ENCODE measurements at regions of chr15 and their contacts with region 1.

Region 1: GRCh38 chr15:67531379-67532059 is 10.6 kb downstream of the C15orf61 start:
- DNase-seq: peak; percentile 9
- H3K4me3 ChIP-seq: no peak overlapping the region
- H3K27ac ChIP-seq: no peak overlapping the region
- H3K4me1 ChIP-seq: no peaks in the 10 kb centered on the region
- H3K27me3 ChIP-seq: no peaks in the 10 kb centered on the region
- CTCF ChIP-seq: no peak
- POLR2A ChIP-seq: no peak

Region 2: GRCh38 chr15:68053701-68054627 is 522.4 kb after region 1 on chr15 and contains the start of gene PIAS1:
- CTCF ChIA-PET with region 1: no interaction called
- POLR2A ChIA-PET with region 1: no interaction called
- dilution Hi-C with region 1: no loop called
- intact Hi-C with region 1: loop called (anchors 10 kb)
- DNase-seq: peak; percentile 95
- H3K4me3 ChIP-seq: peak within 1 kb of the TSS; percentile 88 to 97 (median 91)
- H3K27ac ChIP-seq: peak within 1 kb of the TSS; percentile 39
- H3K4me1 ChIP-seq: peaks cover 15% of the 10 kb centered on the region
- H3K27me3 ChIP-seq: peaks cover 1 to 7% of the 10 kb centered on the region in 2 experiments
- CTCF ChIP-seq: no peak
- POLR2A ChIP-seq: peak; percentile 82
- total RNA-seq, gene PIAS1: 24.2 and 32.3 TPM in 2 replicates